Activated CD4-positive, alpha-beta memory T cell treated with anti-CD3 and anti-CD28 coated beads for 36 hours (primary cell): ENCODE measurements at regions of chrX and their contacts with region 1.

Region 1: DNA sequence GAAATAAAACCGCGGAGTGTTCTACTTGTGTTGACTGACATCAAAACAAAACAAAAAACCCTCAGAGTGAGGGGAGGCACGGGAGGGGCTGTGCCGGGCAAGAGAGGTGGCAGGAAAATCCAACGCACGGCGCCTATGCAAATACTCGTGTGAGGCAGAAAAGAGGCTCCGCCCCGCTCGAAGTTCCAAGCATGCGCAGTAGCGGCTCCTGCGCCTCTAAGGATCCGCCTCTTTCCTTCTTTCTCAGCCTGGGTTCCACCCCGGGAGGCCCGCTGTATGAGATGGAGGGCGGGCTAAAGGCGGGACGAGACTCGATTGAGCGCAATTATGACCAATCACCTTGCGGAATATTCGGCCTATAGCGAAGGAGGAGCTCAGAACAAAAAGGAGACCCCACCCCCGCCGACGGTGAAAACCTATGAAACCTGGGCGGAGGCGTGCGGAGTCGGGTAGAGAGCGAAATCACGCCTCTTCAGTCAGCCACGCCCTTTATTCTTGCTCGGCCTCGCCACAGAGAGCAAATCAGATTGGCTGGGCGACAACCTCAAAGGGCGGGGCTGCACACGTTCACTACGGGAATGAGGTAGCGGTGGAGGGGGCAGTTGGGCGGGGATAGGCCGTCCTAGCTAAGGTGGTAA is 720 bp upstream of the CDK16 start:
- DNase-seq: peak; percentile 97
- H3K4me3 Mint-ChIP-seq: peak overlapping the region; percentile 87
- H3K27ac Mint-ChIP-seq: peak overlapping the region; percentile 97
- H3K4me1 Mint-ChIP-seq: peaks cover 32% of the 10 kb centered on the region
- H3K27me3 Mint-ChIP-seq: no peaks in the 10 kb centered on the region

Region 2: GRCh38 chrX:47247206-47247998 is 29.6 kb after region 1 on chrX:
- CTCF ChIA-PET with region 1: no interaction called
- POLR2A ChIA-PET with region 1: no interaction called
- intact Hi-C with region 1: no loop called
- DNase-seq: peak; percentile 60
- H3K4me3 Mint-ChIP-seq: no peak overlapping the region
- H3K27ac Mint-ChIP-seq: peak overlapping the region; percentile 42
- H3K4me1 Mint-ChIP-seq: peaks cover 22% of the 10 kb centered on the region
- H3K27me3 Mint-ChIP-seq: no peaks in the 10 kb centered on the region

Region 3: DNA sequence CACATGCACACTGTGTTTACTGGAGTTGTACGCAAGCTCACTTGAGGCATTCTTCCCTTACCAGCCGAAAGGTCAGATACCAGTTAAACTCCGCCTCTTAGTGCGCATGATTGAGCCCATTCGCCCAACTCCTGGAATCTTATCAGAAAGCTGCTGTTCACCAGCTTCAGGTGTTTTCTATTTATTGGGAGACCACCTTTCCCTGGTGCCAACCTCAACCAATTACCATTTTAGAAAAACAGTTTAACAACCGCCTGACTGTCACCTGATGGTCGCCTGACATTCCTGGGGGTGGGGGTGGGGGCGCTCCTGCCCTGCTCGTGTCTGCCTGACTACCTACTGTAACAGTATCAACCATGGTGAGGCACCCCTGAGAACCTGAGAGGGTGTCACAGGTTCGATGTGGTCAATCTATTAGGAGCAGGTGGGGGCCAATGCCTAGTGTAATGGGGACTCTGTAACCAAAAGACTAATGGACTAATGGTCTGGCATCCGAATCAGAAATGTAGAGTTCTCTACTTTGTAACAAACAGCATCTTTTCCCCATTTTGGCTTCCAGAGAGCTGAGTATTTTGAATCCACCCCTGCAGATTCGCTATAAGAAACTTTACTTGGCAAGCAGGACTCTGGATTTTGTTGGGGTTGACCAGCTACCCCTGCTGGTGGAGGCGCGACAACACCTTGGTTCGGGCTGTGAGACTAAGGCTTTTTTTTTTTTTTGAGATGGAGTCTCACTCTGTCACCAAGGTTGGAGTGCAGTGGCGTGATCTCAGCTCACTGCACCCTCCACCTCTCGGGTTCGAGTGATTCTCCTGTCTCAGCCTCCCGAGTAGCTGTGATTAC is 94.4 kb after region 1 on chrX:
- CTCF ChIA-PET with region 1: interaction called, 6 read pairs
- POLR2A ChIA-PET with region 1: interaction called, 3 read pairs
- intact Hi-C with region 1: loop called (anchors 5 kb)
- DNase-seq: peak; percentile 73
- H3K4me3 Mint-ChIP-seq: no peak overlapping the region
- H3K27ac Mint-ChIP-seq: no peak overlapping the region
- H3K4me1 Mint-ChIP-seq: no peaks in the 10 kb centered on the region
- H3K27me3 Mint-ChIP-seq: no peaks in the 10 kb centered on the region